ENCODE measurements at regions of chr6 and their contacts with region 1.

Region 1: DNA sequence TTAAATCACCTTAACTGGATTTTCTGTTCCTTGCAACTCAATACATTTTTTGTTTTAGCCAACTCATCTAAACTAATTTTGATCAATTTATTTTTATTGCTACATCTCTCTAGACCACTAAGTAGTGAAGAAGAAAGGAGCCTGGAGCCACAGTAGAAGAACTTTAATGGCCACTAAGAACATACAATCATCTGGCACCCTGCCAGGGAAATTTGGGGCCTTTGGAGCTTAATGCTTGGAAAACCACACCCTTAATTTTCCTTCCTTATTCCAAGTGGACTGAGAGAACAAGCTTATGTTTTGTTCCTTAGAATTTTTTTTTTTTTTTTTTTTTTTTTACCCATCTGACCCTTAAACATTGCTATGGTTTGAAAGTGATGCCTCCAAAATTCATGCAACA is 12.0 kb upstream of the GMDS start:
- DNase-seq: no peak
- ATAC-seq: no peak
- H3K4me3 ChIP-seq: no peak overlapping the region
- H3K27ac ChIP-seq: no peak overlapping the region
- H3K4me1 ChIP-seq: peaks cover 61% of the 10 kb centered on the region
- H3K27me3 ChIP-seq: no peaks in the 10 kb centered on the region
- CTCF ChIP-seq: no peak
- EP300 ChIP-seq: no peak
- POLR2A ChIP-seq: no peak
- RAD21 ChIP-seq: no peak

Region 2: GRCh38 chr6:2225422-2226392 is 31.7 kb before region 1 on chr6:
- CTCF ChIA-PET with region 1: no interaction called
- POLR2A ChIA-PET with region 1: interaction called, 4 read pairs
- in situ Hi-C with region 1: no loop called
- intact Hi-C with region 1: loop called (anchors 1 kb)
- DNase-seq: peak; percentile 99
- ATAC-seq: peak; percentile 88
- H3K4me3 ChIP-seq: peak overlapping the region; percentile 1 to 49 (median 7); a peak in 3 of 6 replicates
- H3K27ac ChIP-seq: peak overlapping the region; percentile 85
- H3K4me1 ChIP-seq: peaks cover 99% of the 10 kb centered on the region
- H3K27me3 ChIP-seq: no peaks in the 10 kb centered on the region
- CTCF ChIP-seq: no peak
- EP300 ChIP-seq: peak; percentile 34 to 96; a peak in 3 of 4 replicates
- POLR2A ChIP-seq: peak in 1 of 2 experiments; percentile 39; a peak in 1 of 4 replicates
- RAD21 ChIP-seq: no peak

Region 3: DNA sequence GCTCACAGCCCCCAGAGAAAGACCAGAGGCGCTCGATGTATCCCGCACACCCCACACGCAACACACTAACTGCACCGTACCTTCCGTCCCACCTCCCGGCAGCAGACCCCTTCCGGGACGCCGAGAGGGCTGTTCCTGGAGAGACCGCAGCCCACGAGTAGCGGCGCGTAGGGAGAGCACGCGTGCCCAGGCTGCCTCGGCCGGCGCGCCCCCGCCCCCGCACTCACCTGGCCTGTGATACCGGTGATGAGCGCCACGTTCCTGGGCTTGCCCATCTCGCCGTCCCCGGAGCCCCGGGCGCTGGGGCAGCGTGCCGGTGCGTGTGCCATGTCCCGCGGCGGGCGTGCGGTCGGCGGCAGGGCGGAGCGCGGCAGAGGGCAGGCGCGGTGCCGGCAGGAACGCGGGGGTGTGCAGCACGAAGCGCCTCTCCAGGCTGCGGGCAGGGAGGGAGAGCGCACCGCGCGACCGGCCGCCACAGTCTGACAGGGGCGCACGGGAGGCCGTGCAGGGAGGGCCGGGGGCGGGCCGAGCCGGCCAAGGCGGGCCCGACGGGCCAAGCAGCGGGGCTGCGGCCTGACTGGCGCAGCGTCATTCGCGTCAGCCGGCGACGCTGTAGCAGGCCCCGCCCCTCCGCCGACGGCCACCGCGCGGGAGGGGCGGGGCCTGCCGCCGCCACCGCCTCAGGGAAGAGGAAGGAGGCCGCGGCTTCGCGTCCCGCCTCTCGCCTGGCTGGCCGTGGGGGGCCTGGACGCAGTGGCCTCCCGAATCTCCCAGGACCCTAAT is 12.1 kb before region 1 on chr6 and contains the start of gene GMDS:
- CTCF ChIA-PET with region 1: no interaction called
- POLR2A ChIA-PET with region 1: interaction called, 14 read pairs
- in situ Hi-C with region 1: no loop called
- intact Hi-C with region 1: loop called (anchors 1 kb)
- DNase-seq: peak; percentile 85
- ATAC-seq: peak; percentile 97
- H3K4me3 ChIP-seq: peak within 1 kb of the TSS; percentile 90 to 97 (median 96)
- H3K27ac ChIP-seq: peak within 1 kb of the TSS; percentile 92
- H3K4me1 ChIP-seq: peaks cover 68% of the 10 kb centered on the region
- H3K27me3 ChIP-seq: no peaks in the 10 kb centered on the region; a peak in 1 of 5 replicates
- CTCF ChIP-seq: peak; percentile 37; the same call in 1 of the 2 replicates
- EP300 ChIP-seq: 0 out of 4 replicates have a peak, but pooled peaks of 1 of the 2 experiments have one; percentile 1
- POLR2A ChIP-seq: peak; percentile 87 to 97
- RAD21 ChIP-seq: peak; percentile 71
- total RNA-seq, gene GMDS: 59.6 and 64.4 TPM in 2 replicates

Region 4: DNA sequence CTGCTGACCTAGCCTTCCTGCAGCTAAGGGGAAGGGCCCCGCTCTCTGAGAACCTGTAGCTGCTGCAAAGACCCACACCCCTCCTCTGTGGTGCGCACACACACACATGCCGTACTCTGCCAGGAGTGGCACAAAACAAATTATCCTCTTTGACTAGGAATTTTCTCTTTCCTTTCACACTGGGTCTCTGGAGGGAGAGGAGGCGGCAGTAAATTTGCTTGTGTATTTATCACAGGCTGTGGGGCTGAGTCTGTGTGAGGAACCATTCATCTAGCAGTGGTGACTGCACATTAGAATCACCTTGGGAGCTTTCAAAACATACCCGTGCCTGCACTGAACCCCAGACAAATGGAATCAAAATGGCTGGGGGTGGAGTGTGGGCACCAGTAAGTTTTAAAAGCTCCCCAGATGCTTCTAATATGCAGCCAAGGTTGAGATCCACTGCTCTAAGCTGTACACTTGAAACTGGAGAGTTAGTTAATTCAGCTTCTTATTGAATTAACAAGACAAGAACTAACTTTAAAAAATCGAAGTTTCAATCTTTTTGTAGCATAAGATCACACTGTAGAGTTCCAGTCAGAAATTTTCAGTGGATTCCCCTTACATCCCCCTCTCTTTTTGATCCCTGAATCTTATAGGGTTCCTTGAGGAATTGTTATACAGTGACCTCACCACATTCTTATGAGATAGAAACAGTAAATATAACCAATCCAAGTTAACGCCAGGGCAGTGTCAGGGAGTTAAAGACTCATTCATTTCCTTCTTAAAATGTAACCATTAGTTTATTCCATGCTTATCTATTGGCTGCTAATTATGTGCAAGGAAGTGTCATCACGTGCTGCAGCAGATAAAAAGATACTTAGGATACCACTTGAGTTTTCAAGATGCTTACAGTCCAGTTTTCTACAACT is 17.9 kb after region 1 on chr6:
- CTCF ChIA-PET with region 1: no interaction called
- POLR2A ChIA-PET with region 1: no interaction called
- in situ Hi-C with region 1: no loop called
- intact Hi-C with region 1: loop called (anchors 1 kb)
- DNase-seq: no peak
- ATAC-seq: no peak
- H3K4me3 ChIP-seq: no peak overlapping the region
- H3K27ac ChIP-seq: no peak overlapping the region
- H3K4me1 ChIP-seq: no peaks in the 10 kb centered on the region
- H3K27me3 ChIP-seq: no peaks in the 10 kb centered on the region
- CTCF ChIP-seq: no peak
- EP300 ChIP-seq: no peak
- POLR2A ChIP-seq: no peak
- RAD21 ChIP-seq: no peak

Region 5: DNA sequence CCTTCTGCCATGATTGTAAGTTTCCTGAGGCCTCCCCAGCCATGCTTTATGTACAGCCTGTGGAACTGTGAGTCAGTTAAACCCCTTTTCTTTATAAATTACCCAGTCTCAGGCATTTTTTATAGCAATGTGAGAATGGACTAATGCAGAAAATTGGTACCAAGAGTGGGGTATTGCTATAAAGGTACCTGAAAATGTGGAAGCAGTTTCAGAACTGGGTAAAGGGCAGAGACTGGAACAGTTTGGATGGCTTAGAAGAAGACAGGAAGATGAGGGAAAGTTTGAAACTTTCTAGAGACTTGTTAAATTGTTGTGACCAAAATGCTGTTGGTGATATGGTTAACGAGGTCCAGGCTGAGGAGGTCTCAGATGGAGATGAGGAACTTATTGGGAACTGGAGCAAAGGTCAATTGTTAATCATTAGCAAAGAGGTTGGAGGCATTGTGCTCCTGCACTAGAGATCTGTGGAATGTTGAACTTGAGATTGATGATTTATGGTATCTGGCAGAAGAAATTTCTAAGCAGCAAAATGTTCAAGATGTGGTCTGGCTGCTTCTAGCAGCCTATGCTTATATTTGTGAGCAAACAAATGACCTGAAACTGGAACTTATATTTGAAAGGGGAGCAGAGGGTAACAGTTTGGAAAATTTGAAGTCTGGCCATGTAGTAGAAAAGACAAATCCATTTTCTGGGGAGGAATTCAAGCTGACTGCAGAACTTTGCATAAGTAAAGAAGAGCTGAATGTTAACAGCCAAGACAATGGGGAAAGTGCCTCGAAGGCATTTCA is 67.0 kb after region 1 on chr6:
- CTCF ChIA-PET with region 1: no interaction called
- POLR2A ChIA-PET with region 1: no interaction called
- in situ Hi-C with region 1: no loop called
- intact Hi-C with region 1: loop called (anchors 5 kb)
- DNase-seq: no peak
- ATAC-seq: no peak
- H3K4me3 ChIP-seq: no peak overlapping the region
- H3K27ac ChIP-seq: no peak overlapping the region
- H3K4me1 ChIP-seq: peaks cover 6% of the 10 kb centered on the region; the same call in 1 of the 2 replicates
- H3K27me3 ChIP-seq: no peaks in the 10 kb centered on the region
- CTCF ChIP-seq: no peak
- EP300 ChIP-seq: no peak
- POLR2A ChIP-seq: no peak
- RAD21 ChIP-seq: no peak

Region 6: GRCh38 chr6:2396846-2397630 is 139.7 kb after region 1 on chr6:
- CTCF ChIA-PET with region 1: no interaction called
- POLR2A ChIA-PET with region 1: no interaction called
- in situ Hi-C with region 1: no loop called
- intact Hi-C with region 1: no loop called
- DNase-seq: no peak
- ATAC-seq: no peak
- H3K4me3 ChIP-seq: no peak overlapping the region
- H3K27ac ChIP-seq: no peak overlapping the region
- H3K4me1 ChIP-seq: no peaks in the 10 kb centered on the region
- H3K27me3 ChIP-seq: no peaks in the 10 kb centered on the region
- CTCF ChIP-seq: no peak
- EP300 ChIP-seq: no peak
- POLR2A ChIP-seq: no peak
- RAD21 ChIP-seq: no peak

Region 7: GRCh38 chr6:2432239-2432638 is 174.9 kb after region 1 on chr6:
- CTCF ChIA-PET with region 1: no interaction called
- POLR2A ChIA-PET with region 1: no interaction called
- in situ Hi-C with region 1: no loop called
- intact Hi-C with region 1: no loop called
- DNase-seq: no peak
- ATAC-seq: no peak
- H3K4me3 ChIP-seq: no peak overlapping the region
- H3K27ac ChIP-seq: no peak overlapping the region
- H3K4me1 ChIP-seq: no peaks in the 10 kb centered on the region
- H3K27me3 ChIP-seq: no peaks in the 10 kb centered on the region
- CTCF ChIP-seq: no peak
- EP300 ChIP-seq: no peak
- POLR2A ChIP-seq: no peak
- RAD21 ChIP-seq: no peak

Measured in HepG2 (cell line).